HepG2 (cell line): ENCODE measurements at regions of chr2 and their contacts with region 1.

Region 1: DNA sequence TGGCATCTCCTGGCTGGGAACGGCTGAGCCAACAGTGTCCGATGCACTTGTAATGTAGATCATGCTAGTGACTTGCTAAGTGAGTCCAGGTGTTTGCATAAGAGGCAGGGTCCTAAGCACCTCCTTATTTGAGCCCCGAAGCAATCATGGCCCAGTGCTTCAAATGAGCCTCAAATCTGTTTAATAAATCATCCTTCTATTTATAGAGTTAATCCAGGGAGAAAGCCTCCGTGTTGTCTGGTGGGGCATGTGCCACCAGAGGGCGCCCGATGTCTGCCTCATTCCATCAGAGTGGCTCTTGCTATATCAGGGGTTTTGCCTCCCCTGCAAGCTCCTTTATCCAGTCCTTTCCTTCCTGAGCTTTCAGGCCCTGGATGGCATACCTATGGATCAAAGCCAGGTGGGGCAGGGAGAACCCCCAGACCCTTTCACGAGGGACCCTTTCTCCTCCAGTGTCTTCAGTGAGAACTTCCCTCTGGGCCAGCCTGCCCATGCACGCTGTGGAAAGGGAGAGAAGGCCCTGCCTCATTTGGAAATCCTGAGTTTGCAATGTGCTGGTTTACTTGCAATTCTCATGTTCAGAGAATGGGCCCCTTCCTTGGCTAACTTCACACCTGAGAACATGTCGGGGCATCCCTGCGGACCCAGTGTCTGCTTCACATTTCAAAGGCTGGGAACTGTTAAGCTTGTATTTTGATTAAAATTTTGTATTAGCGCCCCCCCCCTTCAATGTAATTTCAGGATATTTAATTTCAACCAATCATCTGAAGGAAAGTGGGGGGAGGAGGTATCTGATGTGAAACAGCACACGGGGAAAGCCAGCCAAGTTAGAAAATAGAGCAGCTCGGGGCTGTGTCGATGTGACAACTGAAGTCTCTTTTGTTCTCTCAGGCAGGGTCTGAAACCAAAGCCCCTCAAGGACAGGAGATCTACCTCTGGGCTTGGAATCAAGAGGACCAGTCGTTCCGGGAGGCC is 39.7 kb downstream of the RDH14 start:
- DNase-seq: peak; percentile 71
- ATAC-seq: peak; percentile 96
- H3K4me3 ChIP-seq: no peak overlapping the region
- H3K27ac ChIP-seq: no peak overlapping the region
- H3K4me1 ChIP-seq: no peaks in the 10 kb centered on the region
- H3K27me3 ChIP-seq: peaks cover 2 to 11% of the 10 kb centered on the region in 2 experiments; a peak in 4 of 5 replicates
- CTCF ChIP-seq: peak; percentile 93
- EP300 ChIP-seq: no peak
- POLR2A ChIP-seq: no peak
- RAD21 ChIP-seq: peak; percentile 95

Region 2: GRCh38 chr2:18741895-18742732 is 221.4 kb after region 1 on chr2:
- CTCF ChIA-PET with region 1: no interaction called
- POLR2A ChIA-PET with region 1: no interaction called
- in situ Hi-C with region 1: loop called (anchors 5 kb)
- intact Hi-C with region 1: loop called (anchors 1 kb)
- DNase-seq: no peak
- ATAC-seq: peak; percentile 47; the same call in 2 of the 3 replicates
- H3K4me3 ChIP-seq: no peak overlapping the region
- H3K27ac ChIP-seq: no peak overlapping the region
- H3K4me1 ChIP-seq: no peaks in the 10 kb centered on the region
- H3K27me3 ChIP-seq: no peaks in the 10 kb centered on the region
- CTCF ChIP-seq: peak; percentile 10; the same call in 1 of the 2 replicates
- EP300 ChIP-seq: no peak
- POLR2A ChIP-seq: no peak
- RAD21 ChIP-seq: no peak

Region 3: DNA sequence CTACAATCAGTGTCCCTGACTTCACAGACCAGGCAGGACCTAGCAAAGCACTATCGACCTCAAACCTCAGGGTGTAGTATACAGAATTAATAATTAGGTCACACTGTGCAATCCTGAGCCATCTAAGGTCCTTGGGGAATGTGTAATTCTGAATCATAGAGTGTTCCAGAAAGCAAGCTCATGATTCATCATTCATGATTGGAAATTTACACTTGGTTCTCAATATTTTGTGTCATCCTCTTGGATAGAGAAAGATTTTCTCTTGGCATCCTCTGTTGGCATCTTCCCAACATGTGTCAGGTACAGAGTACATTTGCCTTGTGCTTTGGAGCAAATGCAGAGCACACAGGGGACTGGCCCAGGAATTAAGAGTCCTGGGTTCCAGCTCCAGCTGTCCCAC is 313.6 kb after region 1 on chr2:
- CTCF ChIA-PET with region 1: no interaction called
- POLR2A ChIA-PET with region 1: no interaction called
- in situ Hi-C with region 1: no loop called
- intact Hi-C with region 1: loop called (anchors 5 kb)
- DNase-seq: no peak
- ATAC-seq: no peak
- H3K4me3 ChIP-seq: no peak overlapping the region
- H3K27ac ChIP-seq: no peak overlapping the region
- H3K4me1 ChIP-seq: peaks cover 44% of the 10 kb centered on the region
- H3K27me3 ChIP-seq: no peaks in the 10 kb centered on the region
- CTCF ChIP-seq: no peak
- EP300 ChIP-seq: no peak
- POLR2A ChIP-seq: no peak
- RAD21 ChIP-seq: no peak

Region 4: GRCh38 chr2:19746611-19747309 is 1226.0 kb after region 1 on chr2:
- CTCF ChIA-PET with region 1: no interaction called
- POLR2A ChIA-PET with region 1: no interaction called
- in situ Hi-C with region 1: no loop called
- intact Hi-C with region 1: loop called (anchors 1 kb)
- DNase-seq: peak; percentile 19
- ATAC-seq: peak; percentile 75
- H3K4me3 ChIP-seq: no peak overlapping the region
- H3K27ac ChIP-seq: no peak overlapping the region
- H3K4me1 ChIP-seq: peaks cover 14% of the 10 kb centered on the region
- H3K27me3 ChIP-seq: peaks cover 4 to 17% of the 10 kb centered on the region in 2 experiments; a peak in 4 of 5 replicates
- CTCF ChIP-seq: peak; percentile 79
- EP300 ChIP-seq: no peak
- POLR2A ChIP-seq: no peak
- RAD21 ChIP-seq: peak; percentile 46